IMR-90 (cell line): ENCODE measurements at regions of chr1 and their contacts with region 1.

Region 1: GRCh38 chr1:110524311-110525251 is 5.6 kb upstream of the KCNA10 start:
- DNase-seq: peak; percentile 30
- ATAC-seq: peak; percentile 65
- H3K4me3 ChIP-seq: no peak overlapping the region
- H3K27ac ChIP-seq: no peak overlapping the region
- H3K4me1 ChIP-seq: no peaks in the 10 kb centered on the region
- H3K27me3 ChIP-seq: peaks cover 42% of the 10 kb centered on the region
- CTCF ChIP-seq: peak; percentile 56
- POLR2A ChIP-seq: no peak
- RAD21 ChIP-seq: peak; percentile 62

Region 2: DNA sequence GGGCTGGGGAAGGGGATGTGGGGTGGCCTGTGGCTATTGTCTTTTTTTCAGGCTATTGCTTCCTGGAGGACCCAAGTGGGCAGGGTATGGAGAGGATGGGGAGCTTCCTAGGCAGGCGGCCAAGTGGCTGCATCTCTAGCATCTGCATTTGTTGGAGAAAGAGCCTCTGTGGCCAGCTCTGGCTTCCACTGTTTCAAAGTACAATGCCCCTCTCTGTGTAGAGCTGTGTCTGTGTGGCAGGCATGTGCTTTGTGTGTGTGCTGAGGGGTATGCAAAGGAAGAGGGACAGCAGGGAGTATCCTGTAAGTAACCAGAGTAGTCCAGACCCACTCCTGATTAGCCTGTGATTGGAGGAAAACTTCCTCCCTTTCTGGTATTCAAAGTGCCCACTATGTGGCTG is 41.0 kb after region 1 on chr1:
- CTCF ChIA-PET with region 1: no interaction called
- POLR2A ChIA-PET with region 1: no interaction called
- dilution Hi-C with region 1: no loop called
- in situ Hi-C with region 1: no loop called
- intact Hi-C with region 1: no loop called
- DNase-seq: no peak
- ATAC-seq: no peak
- H3K4me3 ChIP-seq: no peak overlapping the region
- H3K27ac ChIP-seq: no peak overlapping the region
- H3K4me1 ChIP-seq: no peaks in the 10 kb centered on the region
- H3K27me3 ChIP-seq: peaks cover 4% of the 10 kb centered on the region
- CTCF ChIP-seq: no peak
- POLR2A ChIP-seq: no peak
- RAD21 ChIP-seq: no peak

Region 3: DNA sequence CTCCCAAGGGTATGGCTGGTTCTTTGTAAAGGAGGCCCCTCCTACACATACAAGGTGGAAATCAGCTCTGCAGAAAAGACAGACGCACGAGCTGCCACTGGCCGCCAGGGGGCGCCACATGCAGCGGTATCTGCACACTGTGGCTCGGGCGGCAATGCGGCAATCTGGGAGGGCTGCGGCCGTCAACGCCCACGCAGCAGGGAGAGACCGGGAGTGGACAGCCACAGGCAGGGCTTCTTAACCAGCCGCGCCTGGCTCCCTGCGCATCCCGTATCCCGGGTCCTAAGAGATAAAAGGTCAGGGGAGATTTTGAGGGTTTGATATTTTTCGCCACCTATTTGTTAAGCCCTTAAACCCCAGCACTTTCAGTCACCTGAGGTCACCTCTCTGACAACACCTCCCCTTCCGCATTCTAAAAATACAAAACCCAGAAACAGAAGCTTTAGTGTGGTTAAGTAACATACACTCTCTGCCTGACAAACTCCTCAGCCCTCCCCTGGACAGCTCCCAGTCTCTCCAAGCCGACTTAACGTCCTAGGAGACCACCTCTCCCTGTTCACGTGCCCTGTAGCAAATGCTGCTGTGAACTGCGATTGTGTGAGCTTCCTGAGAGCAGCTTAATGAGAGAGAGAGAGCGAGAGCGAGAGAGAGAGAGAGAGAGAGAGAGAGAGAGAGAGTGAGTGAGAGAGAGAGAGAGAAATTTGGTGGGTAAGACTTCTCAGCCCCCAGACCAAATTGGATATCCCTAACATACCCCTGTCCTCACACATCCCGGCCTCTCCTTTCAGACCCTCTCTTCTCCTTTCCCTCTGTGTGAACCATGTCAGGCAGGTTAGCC is 95.0 kb after region 1 on chr1:
- CTCF ChIA-PET with region 1: no interaction called
- POLR2A ChIA-PET with region 1: no interaction called
- dilution Hi-C with region 1: no loop called
- in situ Hi-C with region 1: no loop called
- intact Hi-C with region 1: loop called (anchors 1 kb)
- DNase-seq: peak; percentile 59
- ATAC-seq: peak; percentile 91
- H3K4me3 ChIP-seq: no peak overlapping the region
- H3K27ac ChIP-seq: no peak overlapping the region
- H3K4me1 ChIP-seq: no peaks in the 10 kb centered on the region
- H3K27me3 ChIP-seq: peaks cover 19% of the 10 kb centered on the region
- CTCF ChIP-seq: peak; percentile 75
- POLR2A ChIP-seq: no peak
- RAD21 ChIP-seq: peak; percentile 54